ENCODE measurements at regions of chr1 and their contacts with region 1.

Region 1: DNA sequence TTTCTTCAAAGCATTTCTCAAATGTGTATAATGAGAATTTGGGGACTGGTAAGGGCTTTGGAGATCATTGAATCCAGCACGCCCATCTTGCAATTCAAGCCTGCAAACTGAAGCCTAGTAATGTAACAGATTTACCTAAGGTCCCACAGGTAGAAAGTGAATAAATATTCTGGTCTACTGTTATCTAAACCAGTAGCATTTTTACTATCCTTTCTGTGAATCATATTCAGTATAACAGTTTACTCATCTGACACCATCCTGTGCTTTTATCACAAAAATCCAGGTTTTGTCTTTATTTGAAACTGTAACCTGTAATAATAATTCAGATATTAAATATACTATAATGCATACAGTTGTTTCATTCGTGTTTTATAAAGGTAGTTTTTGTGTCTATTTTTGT is 17.4 kb downstream of the KCNA3 start:
- DNase-seq: no peak
- H3K4me3 ChIP-seq: no peak overlapping the region
- H3K27ac ChIP-seq: no peak overlapping the region
- H3K4me1 ChIP-seq: no peaks in the 10 kb centered on the region
- CTCF ChIP-seq: no peak

Region 2: GRCh38 chr1:110645821-110646735 is 11.3 kb before region 1 on chr1:
- CTCF ChIA-PET with region 1: interaction called, 3 read pairs
- POLR2A ChIA-PET with region 1: interaction called, 10 read pairs
- intact Hi-C with region 1: no loop called
- DNase-seq: no peak
- H3K4me3 ChIP-seq: no peak overlapping the region
- H3K27ac ChIP-seq: no peak overlapping the region
- H3K4me1 ChIP-seq: peaks cover 31% of the 10 kb centered on the region
- CTCF ChIP-seq: no peak

Region 3: GRCh38 chr1:110686188-110686587 is 28.8 kb after region 1 on chr1:
- CTCF ChIA-PET with region 1: no interaction called
- POLR2A ChIA-PET with region 1: no interaction called
- intact Hi-C with region 1: no loop called
- DNase-seq: peak; percentile 31
- H3K4me3 ChIP-seq: no peak overlapping the region
- H3K27ac ChIP-seq: no peak overlapping the region
- H3K4me1 ChIP-seq: peaks cover 9% of the 10 kb centered on the region
- CTCF ChIP-seq: peak; percentile 59

Measured in OCI-LY7 (cell line).